ENCODE measurements at regions of chrX and their contacts with region 1.

Region 1: GRCh38 chrX:149487292-149487691 is 17.8 kb downstream of the IDS start:
- DNase-seq: no peak
- H3K4me3 ChIP-seq: no peak overlapping the region
- H3K27ac ChIP-seq: no peak overlapping the region
- H3K4me1 ChIP-seq: no peaks in the 10 kb centered on the region
- H3K27me3 ChIP-seq: no peaks in the 10 kb centered on the region

Region 2: GRCh38 chrX:148871422-148872160 is 615.7 kb before region 1 on chrX:
- in situ Hi-C with region 1: loop called (anchors 25 kb)
- DNase-seq: peak; percentile 81
- H3K4me3 ChIP-seq: peak overlapping the region; percentile 11
- H3K27ac ChIP-seq: peak overlapping the region; percentile 54
- H3K4me1 ChIP-seq: peaks cover 31% of the 10 kb centered on the region
- H3K27me3 ChIP-seq: no peaks in the 10 kb centered on the region

Measured in GM23248 (cell line).